PC-3 (cell line): ENCODE measurements at regions of chr12 and their contacts with region 1.

Region 1: DNA sequence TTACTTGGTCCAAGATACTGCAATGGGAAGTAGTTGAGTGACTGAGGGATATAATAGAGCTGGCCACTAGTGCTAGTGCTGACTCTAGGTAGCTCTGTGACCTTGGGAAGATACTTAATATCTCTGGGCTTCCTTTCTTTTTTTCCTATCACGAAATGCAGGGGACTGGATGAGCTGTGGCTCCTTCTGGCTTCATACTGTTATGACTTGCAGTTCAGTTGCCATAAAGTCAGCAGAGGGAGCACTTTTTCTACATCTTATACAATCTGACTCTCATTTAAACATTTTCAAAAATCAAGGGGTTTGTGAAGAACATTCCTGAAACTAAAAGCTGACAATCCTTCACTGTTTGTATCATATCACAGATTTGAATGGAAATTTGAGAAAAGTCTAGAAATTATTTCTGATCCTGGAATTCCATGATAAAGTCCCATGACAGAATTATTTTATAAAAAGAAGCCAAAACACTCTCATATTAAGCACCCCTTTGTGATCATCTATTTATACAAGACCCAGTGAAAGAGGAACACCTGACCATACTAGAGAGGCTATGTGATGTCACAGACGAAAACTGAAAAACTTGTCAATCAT is 5.4 kb downstream of the BHLHE41 start:
- DNase-seq: peak; percentile 88
- ATAC-seq: peak; percentile 23
- H3K4me3 ChIP-seq: peak overlapping the region; percentile 77
- H3K27ac ChIP-seq: peak overlapping the region; percentile 74
- H3K4me1 ChIP-seq: peaks cover 54% of the 10 kb centered on the region
- H3K27me3 ChIP-seq: no peaks in the 10 kb centered on the region
- CTCF ChIP-seq: peak; percentile 94

Region 2: DNA sequence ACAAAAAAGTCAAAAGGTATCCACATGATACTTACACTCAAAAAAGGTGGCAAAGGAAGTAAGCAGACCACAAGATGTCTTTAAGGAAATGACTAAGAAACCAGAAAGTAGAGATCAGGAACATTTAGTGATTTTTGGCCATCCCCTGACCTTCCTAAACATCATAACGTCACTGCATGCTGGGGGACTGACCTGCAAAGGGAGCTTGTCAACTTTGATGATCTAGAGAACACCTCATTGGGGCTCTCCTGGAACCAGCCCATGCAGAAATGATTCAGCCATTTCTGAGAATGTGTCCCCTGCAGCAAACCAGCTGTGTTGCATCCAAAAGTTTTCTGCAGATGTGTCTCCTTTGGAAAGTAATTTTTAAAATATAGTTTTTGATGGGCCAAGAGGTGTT is 313.2 kb before region 1 on chr12:
- CTCF ChIA-PET with region 1: no interaction called
- POLR2A ChIA-PET with region 1: no interaction called
- intact Hi-C with region 1: no loop called
- DNase-seq: peak; percentile 73
- ATAC-seq: peak; percentile 76
- H3K4me3 ChIP-seq: no peak overlapping the region
- H3K27ac ChIP-seq: 0 out of 2 replicates have a peak overlapping the region, but pooled peaks have one; percentile 1
- H3K4me1 ChIP-seq: peaks cover 18% of the 10 kb centered on the region
- H3K27me3 ChIP-seq: no peaks in the 10 kb centered on the region
- CTCF ChIP-seq: no peak

Region 3: DNA sequence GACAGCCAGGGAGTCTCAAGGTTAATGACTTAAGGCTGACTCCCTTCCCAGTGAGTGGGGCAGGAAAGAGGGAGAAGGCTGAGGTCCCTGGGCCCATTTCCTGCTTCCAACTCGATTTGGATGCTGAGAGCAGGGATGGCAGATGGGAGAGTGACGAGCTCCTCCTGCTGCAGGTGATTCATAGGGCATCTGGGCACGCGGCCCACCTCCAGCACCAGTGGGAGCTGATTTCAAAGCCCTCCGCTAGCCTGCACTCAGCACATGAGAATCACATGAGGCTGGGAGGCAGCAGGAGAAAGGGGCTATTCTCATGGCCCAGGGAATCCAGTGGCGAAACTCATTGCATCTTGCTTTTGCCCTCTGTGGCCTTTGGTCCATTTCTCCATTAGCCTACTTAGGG is 166.7 kb after region 1 on chr12:
- CTCF ChIA-PET with region 1: interaction called, 3 read pairs
- POLR2A ChIA-PET with region 1: no interaction called
- intact Hi-C with region 1: loop called (anchors 1 kb)
- DNase-seq: peak; percentile 28
- ATAC-seq: peak; percentile 56; the same call in 1 of the 2 replicates
- H3K4me3 ChIP-seq: no peak overlapping the region
- H3K27ac ChIP-seq: no peak overlapping the region
- H3K4me1 ChIP-seq: no peaks in the 10 kb centered on the region
- H3K27me3 ChIP-seq: no peaks in the 10 kb centered on the region
- CTCF ChIP-seq: 0 out of 2 replicates have a peak, but pooled peaks have one; percentile 13

Region 4: GRCh38 chr12:26402648-26403047 is 283.2 kb after region 1 on chr12:
- CTCF ChIA-PET with region 1: interaction called, 6 read pairs
- POLR2A ChIA-PET with region 1: interaction called, 3 read pairs
- intact Hi-C with region 1: loop called (anchors 1 kb)
- DNase-seq: peak; percentile 100
- ATAC-seq: peak; percentile 98
- H3K4me3 ChIP-seq: peak overlapping the region; percentile 24
- H3K27ac ChIP-seq: peak overlapping the region; percentile 91
- H3K4me1 ChIP-seq: peaks cover 31% of the 10 kb centered on the region
- H3K27me3 ChIP-seq: no peaks in the 10 kb centered on the region
- CTCF ChIP-seq: peak; percentile 46

Region 5: DNA sequence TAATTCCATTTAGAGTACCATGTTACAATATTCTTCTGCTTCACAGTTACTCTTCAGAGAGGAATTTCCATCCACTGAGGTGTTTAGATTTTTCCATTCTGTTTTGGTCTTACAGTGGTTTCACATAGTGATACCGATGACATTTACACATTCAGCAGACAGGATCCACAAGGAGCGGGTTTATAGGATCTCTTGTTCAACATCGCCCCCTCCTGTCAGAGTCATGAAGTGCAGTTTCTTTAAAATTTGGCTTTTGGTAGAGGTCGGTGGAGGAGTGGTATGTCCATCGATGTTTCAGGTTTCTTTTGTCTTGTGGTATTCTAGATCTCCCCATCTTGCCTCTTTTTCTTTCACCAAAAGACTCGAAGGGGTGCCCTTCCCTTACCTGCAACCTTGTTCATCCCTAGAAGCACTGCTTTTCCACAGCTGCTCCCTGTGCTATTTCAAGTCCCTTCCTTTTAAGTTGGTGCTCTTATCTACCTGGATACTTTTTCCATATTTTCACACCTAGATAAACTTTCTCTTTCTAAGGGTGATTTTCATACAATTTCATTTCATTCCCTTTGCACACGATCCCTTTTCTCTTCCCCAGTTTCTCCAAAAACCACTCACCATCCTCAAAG is 532.2 kb after region 1 on chr12:
- CTCF ChIA-PET with region 1: interaction called, 5 read pairs
- POLR2A ChIA-PET with region 1: no interaction called
- intact Hi-C with region 1: loop called (anchors 1 kb)
- DNase-seq: peak; percentile 97
- ATAC-seq: peak; percentile 85
- H3K4me3 ChIP-seq: no peak overlapping the region
- H3K27ac ChIP-seq: no peak overlapping the region
- H3K4me1 ChIP-seq: peaks cover 22% of the 10 kb centered on the region
- H3K27me3 ChIP-seq: no peaks in the 10 kb centered on the region
- CTCF ChIP-seq: peak; percentile 99